ENCODE measurements at regions of chr18 and their contacts with region 1.

Region 1: GRCh38 chr18:59685501-59685900 is 11.7 kb downstream of the CCBE1 start:
- DNase-seq: no peak
- CTCF ChIP-seq: no peak

Region 2: DNA sequence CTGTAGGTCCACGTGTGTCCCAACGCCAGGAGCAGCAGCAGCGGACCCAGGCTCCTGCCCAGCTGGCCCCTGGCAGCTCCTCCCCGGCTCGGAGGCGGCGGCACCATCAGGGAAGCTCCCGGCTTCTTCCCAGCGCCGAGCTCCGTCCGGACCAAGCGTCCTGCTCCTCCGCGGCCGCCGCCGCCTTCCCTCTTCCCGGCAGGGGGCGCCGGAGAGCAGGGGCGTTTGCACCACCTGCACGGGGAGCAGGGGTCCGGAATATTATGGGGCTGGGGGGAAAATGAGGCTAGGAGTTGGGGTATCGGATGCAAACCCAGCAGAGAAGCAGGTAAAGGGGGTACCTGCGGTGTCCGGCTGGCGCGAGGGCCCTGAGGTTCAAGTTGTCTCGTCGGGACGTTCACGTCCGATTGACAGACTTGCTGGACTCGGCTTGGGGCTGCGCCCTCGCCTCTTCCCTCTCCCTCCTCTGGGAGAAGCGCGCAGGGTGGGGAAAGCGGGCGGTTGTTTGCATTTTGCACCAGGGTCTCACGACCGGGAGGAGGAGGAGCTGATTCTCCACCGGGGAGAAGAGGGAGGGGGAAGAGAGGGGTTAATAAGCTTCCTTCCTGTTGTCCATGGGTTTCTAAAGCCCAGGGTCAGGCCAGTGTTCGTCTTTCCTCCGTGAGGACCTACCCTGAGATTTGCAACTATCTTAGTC is 11.9 kb after region 1 on chr18 and contains the start of gene CCBE1:
- CTCF ChIA-PET with region 1: interaction called, 30 read pairs
- POLR2A ChIA-PET with region 1: no interaction called
- DNase-seq: peak; percentile 77
- CTCF ChIP-seq: peak; percentile 62

Measured in GM10248 (cell line).